ENCODE measurements at regions of chr5 and their contacts with region 1.

Region 1: DNA sequence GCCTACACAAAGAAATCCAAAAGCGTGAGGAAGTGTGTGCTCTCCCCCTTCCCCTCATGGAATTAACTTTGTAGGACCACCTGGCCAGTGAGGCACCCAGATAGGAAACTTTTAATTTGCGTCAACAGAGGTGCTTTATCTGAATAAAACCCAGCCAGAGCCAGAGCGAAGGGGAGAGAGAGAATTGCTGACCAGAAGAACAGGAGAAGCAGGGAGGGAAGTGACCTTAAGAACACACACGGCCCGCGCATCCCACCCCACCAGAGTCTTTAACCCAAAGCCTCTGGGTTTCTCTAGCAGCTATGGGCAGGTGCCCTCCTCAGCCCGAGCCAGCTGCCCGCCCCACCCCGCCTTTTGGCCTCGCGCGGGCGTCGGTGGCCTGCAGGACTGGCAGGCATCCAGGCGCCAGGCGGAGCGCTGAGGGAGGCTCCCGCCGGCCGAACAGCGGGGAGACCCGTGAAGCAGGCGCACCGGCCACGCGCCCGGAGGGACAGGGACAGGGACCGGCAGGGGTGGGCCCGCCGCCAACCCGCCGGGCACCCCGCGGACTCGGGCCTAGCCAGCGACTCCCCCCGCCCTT is 580 bp downstream of the ERAP1 start:
- DNase-seq: peak; percentile 51 to 82
- H3K4me3 ChIP-seq: peak overlapping the region; percentile 89
- H3K27ac ChIP-seq: peak overlapping the region; percentile 96
- H3K4me1 ChIP-seq: peaks cover 9% of the 10 kb centered on the region; the same call in 1 of the 2 replicates
- H3K27me3 ChIP-seq: no peaks in the 10 kb centered on the region
- CTCF ChIP-seq: no peak

Region 2: DNA sequence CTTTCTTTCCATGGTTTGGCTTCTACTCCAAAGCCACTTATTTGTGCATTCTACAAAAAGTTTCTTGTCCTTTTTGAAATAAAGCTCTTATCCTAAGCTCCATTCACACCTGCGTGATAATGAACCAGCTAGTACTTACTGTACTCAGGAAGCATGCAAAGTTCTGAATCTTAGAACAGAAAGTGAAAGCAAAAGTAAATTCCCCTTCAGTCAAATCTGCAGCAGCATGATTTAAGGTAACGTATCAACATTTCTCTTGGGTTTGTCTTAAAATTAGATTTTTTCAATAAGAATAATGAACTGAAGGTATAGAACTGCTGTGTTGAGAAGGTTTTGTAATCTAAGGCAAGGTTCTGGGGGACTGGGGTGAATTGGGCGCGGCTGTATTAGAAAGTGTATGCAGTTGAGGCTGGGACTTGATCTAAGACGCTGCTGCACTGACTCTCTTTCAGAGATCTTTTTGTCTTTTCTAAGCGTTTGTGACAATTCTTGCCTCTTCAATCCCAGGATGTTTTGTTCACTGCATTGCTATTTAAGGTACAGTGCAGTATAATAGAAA is 69.2 kb after region 1 on chr5 and contains the start of gene ERAP2:
- CTCF ChIA-PET with region 1: no interaction called
- POLR2A ChIA-PET with region 1: interaction called, 35 read pairs
- intact Hi-C with region 1: loop called (anchors 5 kb)
- DNase-seq: peak in 1 of 2 experiments; percentile 60
- H3K4me3 ChIP-seq: peak within 1 kb of the TSS; percentile 64
- H3K27ac ChIP-seq: 0 out of 2 replicates have a peak within 1 kb of the TSS, but pooled peaks have one; percentile 1
- H3K4me1 ChIP-seq: peaks cover 29% of the 10 kb centered on the region
- H3K27me3 ChIP-seq: no peaks in the 10 kb centered on the region
- CTCF ChIP-seq: no peak
- total RNA-seq, gene ERAP2: 48.2 and 51.9 TPM in 2 replicates

Region 3: GRCh38 chr5:97046270-97046982 is 239.3 kb after region 1 on chr5:
- CTCF ChIA-PET with region 1: no interaction called
- POLR2A ChIA-PET with region 1: no interaction called
- intact Hi-C with region 1: no loop called
- DNase-seq: no peak
- H3K4me3 ChIP-seq: no peak overlapping the region
- H3K27ac ChIP-seq: no peak overlapping the region
- H3K4me1 ChIP-seq: no peaks in the 10 kb centered on the region
- H3K27me3 ChIP-seq: no peaks in the 10 kb centered on the region
- CTCF ChIP-seq: no peak